ENCODE measurements at regions of chr3 and their contacts with region 1.

Region 1: DNA sequence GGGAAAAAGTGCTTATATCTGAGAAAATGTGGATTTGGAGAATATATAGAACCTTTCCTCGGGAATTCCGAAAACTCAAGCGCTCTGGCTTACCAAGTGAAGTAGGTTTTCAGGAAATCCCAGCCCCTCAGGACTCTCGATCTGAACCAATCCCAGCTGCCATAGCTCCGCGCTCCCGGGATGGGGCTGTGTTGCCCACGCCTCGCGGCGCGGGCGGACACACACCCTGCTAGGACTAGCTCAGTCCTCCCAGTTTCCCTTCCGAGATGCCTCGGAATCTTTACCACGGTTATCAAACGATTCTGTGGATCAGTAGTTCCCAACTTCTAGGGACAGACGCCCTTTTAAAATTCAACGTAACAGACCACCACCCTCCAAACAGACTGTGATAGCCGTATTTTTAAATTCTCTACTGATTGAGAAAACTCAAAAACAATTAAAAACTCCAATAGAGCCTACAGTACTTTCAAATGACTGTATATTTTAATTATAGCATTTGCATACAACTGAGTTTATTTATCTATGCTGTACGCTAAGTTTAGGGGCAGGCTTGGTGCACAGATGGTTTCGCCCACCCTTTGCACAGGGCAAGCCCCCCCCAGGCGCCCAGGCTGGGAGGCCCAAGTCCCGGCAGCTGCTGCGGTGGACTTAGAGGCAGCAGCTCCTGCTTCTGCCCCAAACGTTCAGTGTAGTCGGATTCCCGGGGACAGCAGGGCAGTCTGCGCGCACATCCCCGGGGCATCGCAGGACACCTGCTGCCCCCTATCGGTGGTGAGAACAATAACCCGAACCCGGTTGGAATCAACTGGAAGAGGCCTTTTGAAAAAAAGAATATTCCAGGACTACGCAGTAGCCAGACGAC is 52.3 kb downstream of the CCDC54 start:
- DNase-seq: peak; percentile 59
- ATAC-seq: peak; percentile 56
- H3K4me3 Mint-ChIP-seq: peak overlapping the region; percentile 89
- H3K27ac Mint-ChIP-seq: peak overlapping the region; percentile 77
- H3K4me1 Mint-ChIP-seq: peaks cover 58% of the 10 kb centered on the region
- H3K27me3 Mint-ChIP-seq: no peaks in the 10 kb centered on the region
- CTCF ChIP-seq: peak; percentile 83

Region 2: GRCh38 chr3:107271787-107272387 is 157.7 kb before region 1 on chr3:
- CTCF ChIA-PET with region 1: interaction called, 11 read pairs
- POLR2A ChIA-PET with region 1: no interaction called
- intact Hi-C with region 1: loop called (anchors 1 kb)
- DNase-seq: no peak
- ATAC-seq: peak; percentile 54
- H3K4me3 Mint-ChIP-seq: no peak overlapping the region
- H3K27ac Mint-ChIP-seq: no peak overlapping the region
- H3K4me1 Mint-ChIP-seq: peaks cover 2% of the 10 kb centered on the region
- H3K27me3 Mint-ChIP-seq: peaks cover 3% of the 10 kb centered on the region
- CTCF ChIP-seq: no peak

Region 3: GRCh38 chr3:107522510-107523288 is 93.1 kb after region 1 on chr3 and contains the start of gene BBX:
- CTCF ChIA-PET with region 1: interaction called, 7 read pairs
- POLR2A ChIA-PET with region 1: interaction called, 24 read pairs
- intact Hi-C with region 1: loop called (anchors 1 kb)
- DNase-seq: peak; percentile 89
- ATAC-seq: peak; percentile 87
- H3K4me3 Mint-ChIP-seq: peak within 1 kb of the TSS; percentile 96
- H3K27ac Mint-ChIP-seq: peak within 1 kb of the TSS; percentile 98
- H3K4me1 Mint-ChIP-seq: peaks cover 37% of the 10 kb centered on the region
- H3K27me3 Mint-ChIP-seq: no peaks in the 10 kb centered on the region
- CTCF ChIP-seq: no peak
- total RNA-seq, gene BBX: 75.8 and 77.5 TPM in 2 replicates

Region 4: DNA sequence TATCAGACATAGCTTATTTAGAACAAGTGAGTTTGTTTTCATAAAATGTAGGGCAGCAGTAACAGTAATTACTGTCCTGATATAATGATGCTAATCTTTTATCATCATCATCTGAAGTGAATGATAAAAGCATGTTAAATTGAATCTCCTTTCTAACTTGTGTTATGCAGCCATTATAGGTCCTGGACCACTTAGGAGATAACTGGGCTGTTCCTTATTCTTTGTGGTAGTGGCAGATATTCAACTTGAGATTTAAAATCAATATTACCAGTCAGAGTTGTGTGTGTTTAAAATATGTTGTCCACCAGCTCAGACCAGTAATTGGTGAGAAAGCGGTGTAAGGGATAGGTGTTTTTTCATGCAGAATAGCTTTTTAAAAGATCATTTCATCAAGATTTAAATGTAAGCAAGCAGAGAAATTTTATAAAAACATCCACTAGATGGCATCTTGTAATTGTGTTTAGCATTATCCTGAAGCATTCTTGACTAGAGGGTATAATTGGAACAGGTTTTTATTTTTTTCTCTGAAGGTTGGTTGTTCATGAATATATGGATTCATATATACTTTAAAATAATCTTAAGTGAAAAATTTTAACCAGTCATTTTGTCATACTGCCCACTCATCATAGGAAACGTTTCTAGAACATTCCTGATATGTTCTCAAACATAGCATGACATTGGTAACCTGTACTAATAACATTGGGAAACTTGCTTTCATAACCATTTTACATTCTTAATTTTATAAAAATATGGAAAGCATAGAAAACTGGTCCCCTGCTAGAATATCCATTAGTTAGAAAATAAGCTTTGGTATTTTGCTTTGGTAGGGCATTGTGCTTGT is 247.1 kb after region 1 on chr3:
- CTCF ChIA-PET with region 1: no interaction called
- POLR2A ChIA-PET with region 1: no interaction called
- intact Hi-C with region 1: loop called (anchors 10 kb)
- DNase-seq: no peak
- ATAC-seq: no peak
- H3K4me3 Mint-ChIP-seq: peak overlapping the region; percentile 42
- H3K27ac Mint-ChIP-seq: peak overlapping the region; percentile 67
- H3K4me1 Mint-ChIP-seq: peaks cover 53% of the 10 kb centered on the region
- H3K27me3 Mint-ChIP-seq: no peaks in the 10 kb centered on the region
- CTCF ChIP-seq: no peak

Region 5: GRCh38 chr3:107816107-107816506 is 386.6 kb after region 1 on chr3:
- CTCF ChIA-PET with region 1: no interaction called
- POLR2A ChIA-PET with region 1: no interaction called
- intact Hi-C with region 1: no loop called
- DNase-seq: no peak
- ATAC-seq: no peak
- H3K4me3 Mint-ChIP-seq: no peak overlapping the region
- H3K27ac Mint-ChIP-seq: no peak overlapping the region
- H3K4me1 Mint-ChIP-seq: no peaks in the 10 kb centered on the region
- H3K27me3 Mint-ChIP-seq: peaks cover 7% of the 10 kb centered on the region
- CTCF ChIP-seq: no peak

Region 6: DNA sequence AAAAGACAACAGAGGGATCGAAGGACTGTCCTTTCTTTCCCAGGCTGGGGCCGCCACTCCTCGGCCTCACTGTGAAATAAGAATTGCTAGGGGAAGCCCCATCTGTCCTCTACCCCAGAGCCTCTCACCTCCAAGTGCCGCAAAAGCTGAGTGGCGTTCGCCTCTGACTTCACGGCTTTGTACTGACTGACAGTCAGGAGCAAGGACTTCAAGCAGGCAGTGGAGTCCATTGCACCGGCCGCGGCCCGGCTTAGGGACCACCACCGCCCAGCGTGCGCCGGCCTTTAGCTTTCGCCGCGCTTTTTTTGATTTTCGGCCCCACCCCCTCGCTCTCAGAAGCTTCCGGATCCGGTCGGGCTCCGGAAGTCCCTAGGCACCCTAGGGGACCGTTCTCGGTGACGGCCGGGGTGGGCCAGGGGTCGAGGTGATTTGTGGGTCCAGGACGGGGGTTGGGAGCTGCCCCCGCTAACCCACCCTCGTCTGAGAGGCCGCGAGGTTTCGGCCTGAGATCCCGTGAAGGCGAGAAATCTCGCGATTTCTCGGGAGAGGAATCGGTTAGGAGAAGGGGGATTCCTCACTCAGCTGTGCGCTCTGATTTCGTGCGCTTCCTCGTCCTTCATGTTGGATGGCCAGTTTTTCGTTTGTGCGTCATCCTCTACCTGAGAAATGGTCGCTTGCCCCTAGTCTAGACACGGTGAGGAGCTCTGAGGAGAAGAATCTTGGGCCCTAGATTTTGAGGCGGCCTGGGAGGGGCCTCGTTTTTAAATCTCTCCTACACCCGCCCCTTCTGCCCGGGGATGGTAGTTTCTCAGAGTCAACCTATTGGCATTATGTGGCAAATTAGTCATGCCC is 1159.8 kb after region 1 on chr3 and contains the starts of genes CIP2A and DZIP3:
- CTCF ChIA-PET with region 1: no interaction called
- POLR2A ChIA-PET with region 1: interaction called, 8 read pairs
- intact Hi-C with region 1: loop called (anchors 1 kb)
- DNase-seq: peak; percentile 85
- ATAC-seq: peak; percentile 92
- H3K4me3 Mint-ChIP-seq: peak within 1 kb of the TSS; percentile 97
- H3K27ac Mint-ChIP-seq: peak within 1 kb of the TSS; percentile 100
- H3K4me1 Mint-ChIP-seq: peaks cover 33% of the 10 kb centered on the region
- H3K27me3 Mint-ChIP-seq: no peaks in the 10 kb centered on the region
- CTCF ChIP-seq: no peak
- total RNA-seq, gene CIP2A: 11.3 and 13.1 TPM in 2 replicates
- total RNA-seq, gene DZIP3: 15.5 and 16.7 TPM in 2 replicates

Measured in activated B cell treated with CpG ODN at 0.5 μM for 24 hours (primary cell).